ENCODE measurements at regions of chr18 and their contacts with region 1.

Region 1: DNA sequence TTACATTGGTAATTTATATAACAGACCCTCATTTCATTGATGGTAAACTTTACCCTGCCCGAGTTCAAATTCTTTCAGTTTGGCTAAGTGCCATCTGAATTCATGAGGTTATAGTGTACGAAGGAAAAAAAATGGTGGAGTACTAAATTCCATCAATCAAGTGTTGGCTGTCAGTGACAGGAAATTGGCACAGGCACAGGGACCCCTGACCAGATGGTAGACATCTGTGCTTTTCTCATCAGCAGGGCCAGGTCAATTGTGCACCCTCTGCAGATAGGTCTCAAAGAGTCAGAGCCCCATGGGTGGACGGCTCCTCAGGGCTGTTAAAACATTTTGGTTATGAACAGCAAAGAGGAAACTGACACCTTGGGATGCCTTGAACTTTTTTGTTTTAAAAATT is 439.2 kb downstream of the SETBP1 start:
- DNase-seq: no peak
- ATAC-seq: no peak
- H3K4me3 ChIP-seq: no peak overlapping the region
- H3K27ac ChIP-seq: no peak overlapping the region
- H3K4me1 ChIP-seq: no peaks in the 10 kb centered on the region
- H3K27me3 ChIP-seq: peaks cover 0 to 11% (median 0%) of the 10 kb centered on the region in 7 donors
- CTCF ChIP-seq: no peak

Region 2: DNA sequence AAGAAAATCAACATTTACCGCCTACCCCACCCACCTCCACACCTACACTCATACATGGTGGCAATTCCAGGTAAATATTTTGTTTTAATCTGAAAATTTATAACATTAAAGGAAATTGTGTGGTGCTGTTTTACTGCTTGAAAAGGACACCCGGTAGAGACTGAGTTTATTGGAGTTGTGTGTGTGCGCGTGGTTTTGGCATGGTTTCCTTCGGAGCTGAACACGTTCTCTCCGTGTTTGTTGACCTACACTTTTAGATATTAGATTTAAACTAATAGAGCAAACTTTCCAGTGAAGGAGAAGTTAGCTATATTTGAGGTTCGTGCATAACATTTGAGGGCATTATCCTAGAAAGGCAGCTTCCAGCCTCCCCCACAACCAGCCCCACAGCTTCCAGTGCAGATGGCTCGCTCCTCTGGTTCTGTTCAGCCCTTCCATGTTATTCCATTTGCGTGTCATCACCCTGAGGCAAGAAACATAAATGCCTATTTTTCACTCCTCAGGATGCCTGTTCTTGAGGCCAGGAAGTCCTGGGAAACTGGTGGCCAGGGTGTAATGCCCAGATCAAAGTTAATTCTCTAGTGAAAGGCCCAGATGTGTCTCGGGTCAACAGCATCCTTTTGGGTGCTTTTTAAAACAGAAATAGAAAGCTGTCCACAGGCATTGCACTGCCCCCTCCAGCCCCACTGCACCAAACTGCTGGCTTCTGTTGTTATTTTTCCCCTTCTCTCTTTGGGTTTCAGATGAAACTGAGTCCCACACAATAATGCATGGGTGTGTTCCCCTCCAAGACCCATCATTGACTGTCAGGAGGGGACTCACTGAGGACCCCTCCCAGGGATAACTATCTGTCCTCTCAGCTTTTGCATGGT is 249.0 kb before region 1 on chr18:
- intact Hi-C with region 1: loop called in 1 of 10 experiments (anchors 10 kb)
- DNase-seq: no peak
- ATAC-seq: no peak
- H3K4me3 ChIP-seq: no peak overlapping the region
- H3K27ac ChIP-seq: no peak overlapping the region
- H3K4me1 ChIP-seq: no peaks in the 10 kb centered on the region
- H3K27me3 ChIP-seq: peaks cover 0 to 4% (median 0%) of the 10 kb centered on the region in 7 donors
- CTCF ChIP-seq: no peak

Region 3: GRCh38 chr18:45295388-45295787 is 175.5 kb after region 1 on chr18:
- intact Hi-C with region 1: no loop called
- DNase-seq: no peak
- ATAC-seq: no peak
- H3K4me3 ChIP-seq: no peak overlapping the region
- H3K27ac ChIP-seq: no peak overlapping the region
- H3K4me1 ChIP-seq: no peaks in the 10 kb centered on the region
- H3K27me3 ChIP-seq: peaks cover 0 to 7% (median 0%) of the 10 kb centered on the region in 7 donors
- CTCF ChIP-seq: no peak

Measured in heart right ventricle (tissue), 16 donors.